Cardiac septum (tissue), 1 donor: ENCODE measurements at regions of chr4 and their contacts with region 1.

Region 1: GRCh38 chr4:1249148-1249730 is 309 bp upstream of the CTBP1 start:
- DNase-seq: peak; percentile 92

Region 2: DNA sequence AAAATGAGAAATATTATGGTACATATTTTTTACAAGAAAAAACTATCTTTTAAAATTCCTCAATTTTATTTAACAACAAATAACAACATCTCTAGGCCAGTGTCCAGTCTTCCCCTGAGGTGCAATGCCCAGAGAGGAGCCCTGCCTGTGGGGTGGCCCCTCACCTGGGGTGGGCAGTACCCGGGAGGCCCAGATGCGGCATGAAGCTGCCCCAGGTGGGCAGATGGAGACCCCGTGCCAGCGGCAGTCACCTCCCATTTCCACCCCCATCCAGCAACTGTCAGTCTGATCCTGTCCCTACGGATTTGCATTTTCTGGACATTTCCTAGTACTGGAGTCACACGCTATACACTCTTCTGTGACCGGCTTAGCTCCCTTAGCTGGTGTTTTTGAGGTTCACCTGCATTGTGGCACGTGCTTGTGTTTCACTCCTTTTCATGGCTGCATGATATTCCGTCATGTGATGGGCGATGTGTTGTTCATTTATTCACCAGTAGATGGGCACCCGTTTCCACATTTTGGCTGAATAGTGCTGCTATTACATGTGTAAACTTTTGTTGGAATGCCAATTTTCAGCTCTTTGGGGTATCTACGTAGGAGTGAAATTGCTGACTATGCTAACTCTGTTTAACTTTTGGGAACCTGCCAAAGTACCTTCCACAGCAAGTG is 28.6 kb after region 1 on chr4:
- intact Hi-C with region 1: no loop called
- DNase-seq: no peak

Region 3: DNA sequence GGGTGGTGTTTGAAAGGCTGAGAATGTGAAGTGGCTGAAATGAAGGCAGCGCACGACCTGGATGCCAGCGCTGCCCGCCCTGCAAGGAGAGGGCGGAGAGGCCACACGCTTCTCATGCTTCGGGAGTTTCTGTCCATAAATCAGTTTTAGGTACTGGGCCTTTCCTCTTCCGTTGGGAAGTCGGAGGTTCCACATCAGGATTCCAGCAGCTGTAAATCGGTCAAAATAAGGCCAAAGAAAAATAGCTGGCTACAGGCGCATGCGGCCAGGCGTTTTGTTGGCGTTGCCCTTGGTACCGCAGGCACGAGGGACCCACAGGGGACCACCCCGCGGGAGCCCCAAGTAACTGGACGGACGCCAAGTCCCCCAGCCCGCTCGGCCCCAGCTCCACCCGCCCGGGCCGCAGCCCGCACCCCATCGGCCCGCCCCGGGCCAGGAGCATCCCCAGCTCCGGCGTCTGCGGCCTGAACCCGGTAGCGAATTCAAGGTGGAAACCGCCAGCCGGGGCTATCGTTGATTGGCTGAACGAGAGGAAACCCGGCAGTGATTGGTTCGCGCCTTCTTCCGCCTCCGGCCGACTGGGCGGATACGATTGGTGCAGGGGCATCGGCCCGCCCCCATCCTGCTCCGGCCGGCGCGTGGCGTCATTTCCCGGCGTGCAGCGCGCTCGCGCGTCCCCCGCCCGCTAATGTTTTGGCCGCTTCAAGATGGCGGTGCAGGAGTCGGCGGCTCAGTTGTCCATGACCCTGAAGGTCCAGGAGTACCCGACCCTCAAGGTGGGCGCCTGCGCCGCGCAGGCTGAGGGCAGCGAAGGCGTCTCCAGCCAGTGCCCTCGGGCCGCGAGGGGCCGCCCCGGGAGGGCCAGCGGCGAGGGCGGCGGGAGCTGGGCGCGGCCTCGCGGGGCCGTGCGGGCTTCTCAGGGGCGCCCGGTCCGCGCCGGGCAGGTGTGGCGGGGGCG is 40.2 kb after region 1 on chr4 and contains the start of gene MAEA:
- intact Hi-C with region 1: loop called (anchors 2 kb)
- DNase-seq: peak; percentile 99
- total RNA-seq, gene MAEA: 55.2 TPM

Region 4: GRCh38 chr4:1318488-1319213 is 69.4 kb after region 1 on chr4:
- intact Hi-C with region 1: no loop called
- DNase-seq: no peak

Region 5: GRCh38 chr4:1398671-1399507 is 149.7 kb after region 1 on chr4:
- intact Hi-C with region 1: no loop called
- DNase-seq: peak; percentile 68